Activated naive CD4-positive, alpha-beta T cell treated with anti-CD3 and anti-CD28 coated beads, Interleukin-2, amount 10 ng/mL, durations not matched to agents 7 days and 5 days (primary cell): ENCODE measurements at regions of chr15 and their contacts with region 1.

Region 1: GRCh38 chr15:98513428-98513991 is 134.8 kb upstream of the IGF1R start:
- DNase-seq: no peak
- H3K4me3 Mint-ChIP-seq: no peak overlapping the region
- H3K27ac Mint-ChIP-seq: no peak overlapping the region
- H3K4me1 Mint-ChIP-seq: no peaks in the 10 kb centered on the region
- H3K27me3 Mint-ChIP-seq: peaks cover 6% of the 10 kb centered on the region

Region 2: DNA sequence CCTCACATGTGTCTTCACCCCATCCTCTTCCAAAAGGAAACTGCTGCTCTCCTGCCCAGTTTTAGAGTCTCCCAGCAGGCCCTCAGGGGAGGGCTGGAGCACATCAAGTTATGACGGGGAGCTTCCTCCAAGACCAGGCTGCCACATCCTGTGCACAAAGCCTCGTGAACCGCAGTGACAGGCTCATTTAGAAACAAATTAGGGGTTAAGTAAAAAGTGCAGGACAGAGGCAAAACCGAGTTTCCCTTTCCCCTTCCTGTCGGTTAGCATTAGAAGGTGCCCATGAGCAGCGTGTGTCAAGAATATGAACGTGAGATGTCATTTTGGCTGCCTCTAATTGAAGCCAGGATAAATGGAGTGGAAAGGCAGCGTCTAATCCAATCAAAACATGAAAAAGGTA is 353.3 kb before region 1 on chr15:
- CTCF ChIA-PET with region 1: no interaction called
- DNase-seq: peak; percentile 80
- H3K4me3 Mint-ChIP-seq: no peak overlapping the region
- H3K27ac Mint-ChIP-seq: peak overlapping the region; percentile 82
- H3K4me1 Mint-ChIP-seq: peaks cover 29% of the 10 kb centered on the region
- H3K27me3 Mint-ChIP-seq: peaks cover 4% of the 10 kb centered on the region

Region 3: DNA sequence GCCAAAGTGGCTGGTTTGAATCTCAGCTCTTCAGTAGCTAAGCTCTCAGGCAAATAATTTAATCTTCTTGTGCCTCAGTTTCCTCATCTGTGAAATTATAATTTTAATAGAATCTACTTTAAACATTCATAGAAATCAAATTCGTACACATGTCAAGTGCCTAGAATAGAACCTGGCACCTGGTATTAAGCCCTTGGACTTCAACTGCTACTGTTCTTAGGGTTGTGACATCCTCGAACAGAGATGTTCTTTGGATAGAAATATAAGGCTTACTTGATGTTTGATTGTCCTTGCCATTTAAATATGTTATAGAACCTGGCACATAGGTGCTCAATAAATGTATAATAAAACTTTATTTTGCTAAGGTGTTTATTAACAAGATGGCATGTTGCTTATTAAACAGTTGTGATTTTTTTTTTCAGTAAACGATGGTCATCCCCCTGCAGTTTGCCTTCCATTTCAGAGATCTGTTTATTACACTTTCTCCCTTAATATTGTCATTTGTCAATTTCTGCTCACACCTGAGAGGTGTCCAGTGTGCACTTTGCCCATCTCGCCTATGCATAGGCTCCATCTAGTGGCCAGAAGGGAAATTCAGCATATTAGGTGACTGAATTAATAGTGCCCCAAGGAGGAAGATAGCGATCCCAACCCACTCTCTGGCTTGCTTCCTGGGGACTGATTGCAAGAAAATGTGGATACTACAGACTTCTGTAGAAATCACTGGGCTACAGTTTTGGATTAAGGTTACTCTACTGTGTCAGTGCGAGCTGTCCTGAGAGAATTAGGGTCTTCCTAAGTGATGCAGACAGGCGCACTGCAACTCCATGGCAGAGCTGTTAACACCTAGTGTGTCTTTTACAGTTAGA is 145.6 kb after region 1 on chr15:
- CTCF ChIA-PET with region 1: interaction called, 88 read pairs
- DNase-seq: peak; percentile 49
- H3K4me3 Mint-ChIP-seq: no peak overlapping the region
- H3K27ac Mint-ChIP-seq: no peak overlapping the region
- H3K4me1 Mint-ChIP-seq: peaks cover 12% of the 10 kb centered on the region
- H3K27me3 Mint-ChIP-seq: peaks cover 4% of the 10 kb centered on the region